K562 (cell line): ENCODE measurements at regions of chr6 and their contacts with region 1.

Region 1: DNA sequence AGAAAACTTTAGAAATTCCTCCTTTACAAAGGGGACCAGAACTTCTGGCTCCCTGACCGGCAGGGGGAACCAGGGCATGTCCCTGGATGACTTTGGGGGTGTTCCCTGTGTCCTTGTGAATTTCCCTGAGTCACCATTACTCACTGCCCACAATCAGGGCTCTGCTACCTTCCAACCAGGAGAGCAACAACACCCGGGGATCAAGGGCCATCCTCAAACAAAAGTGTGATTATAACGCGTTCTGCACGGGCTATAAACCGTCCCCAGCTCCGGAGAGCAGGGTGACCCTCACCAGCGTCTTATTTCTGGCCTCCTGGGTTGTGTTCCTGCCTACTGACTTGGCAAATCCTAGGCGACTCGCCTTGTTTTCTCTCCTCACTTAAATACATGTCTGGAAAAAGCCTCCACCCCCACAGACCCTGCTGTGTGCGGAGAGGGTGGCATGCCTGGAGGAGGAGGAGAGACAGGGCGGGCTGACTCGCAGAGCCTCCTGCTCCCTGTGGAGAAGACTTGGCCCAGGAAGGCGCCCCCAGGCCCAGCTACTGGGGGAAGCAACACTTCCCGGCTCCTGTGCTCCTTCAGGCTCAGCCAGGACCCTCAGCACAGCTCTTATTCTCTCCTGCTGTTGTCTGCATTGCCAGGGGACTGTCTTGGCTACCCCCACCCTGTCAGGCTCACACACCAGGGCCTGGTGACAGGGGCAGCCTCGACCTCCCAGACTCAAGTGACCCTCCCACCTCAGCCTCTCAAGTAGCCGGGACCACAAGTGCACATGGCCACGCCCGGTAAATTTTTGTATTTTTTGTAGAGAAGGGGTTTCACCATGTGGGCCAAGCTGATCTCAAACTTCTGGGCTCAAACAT is 54.1 kb downstream of the FGD2 start:
- DNase-seq: peak; percentile 92 to 97 (median 94)
- ATAC-seq: peak; percentile 85
- H3K4me3 ChIP-seq: no peak overlapping the region
- H3K27ac ChIP-seq: peak overlapping the region; percentile 86
- H3K4me1 ChIP-seq: peaks cover 48 to 61% of the 10 kb centered on the region in 2 experiments
- H3K27me3 ChIP-seq: no peaks in the 10 kb centered on the region
- CTCF ChIP-seq: peak; percentile 81 to 93 (median 87)
- EP300 ChIP-seq: peak; percentile 95
- POLR2A ChIP-seq: peak; percentile 61
- RAD21 ChIP-seq: peak; percentile 92 to 96

Region 2: GRCh38 chr6:37127961-37128862 is 68.6 kb after region 1 on chr6:
- CTCF ChIA-PET with region 1: no interaction called
- POLR2A ChIA-PET with region 1: no interaction called
- in situ Hi-C with region 1: no loop called
- intact Hi-C with region 1: loop called (anchors 2 kb)
- DNase-seq: peak; percentile 65 to 80 (median 72)
- ATAC-seq: peak; percentile 70
- H3K4me3 ChIP-seq: no peak overlapping the region
- H3K27ac ChIP-seq: peak overlapping the region; percentile 73
- H3K4me1 ChIP-seq: peaks cover 50 to 58% of the 10 kb centered on the region in 2 experiments
- H3K27me3 ChIP-seq: no peaks in the 10 kb centered on the region
- CTCF ChIP-seq: peak in 1 of 3 experiments; percentile 20; a peak in 2 of 6 replicates
- EP300 ChIP-seq: no peak; the same call in 1 of the 2 replicates
- POLR2A ChIP-seq: no peak
- RAD21 ChIP-seq: peak; percentile 37 to 42; a peak in 3 of 4 replicates